ENCODE measurements at regions of chr2 and their contacts with region 1.

Region 1: GRCh38 chr2:221969087-221969829 is 329.5 kb downstream of the PAX3 start:
- DNase-seq: peak; percentile 55
- ATAC-seq: peak; percentile 96
- H3K4me3 ChIP-seq: no peak overlapping the region
- H3K27ac ChIP-seq: no peak overlapping the region
- H3K4me1 ChIP-seq: no peaks in the 10 kb centered on the region; the same call in 1 of the 2 replicates
- H3K27me3 ChIP-seq: peaks cover 4% of the 10 kb centered on the region
- CTCF ChIP-seq: peak; percentile 84
- POLR2A ChIP-seq: 0 out of 2 replicates have a peak, but pooled peaks have one; percentile 32
- RAD21 ChIP-seq: peak; percentile 84

Region 2: DNA sequence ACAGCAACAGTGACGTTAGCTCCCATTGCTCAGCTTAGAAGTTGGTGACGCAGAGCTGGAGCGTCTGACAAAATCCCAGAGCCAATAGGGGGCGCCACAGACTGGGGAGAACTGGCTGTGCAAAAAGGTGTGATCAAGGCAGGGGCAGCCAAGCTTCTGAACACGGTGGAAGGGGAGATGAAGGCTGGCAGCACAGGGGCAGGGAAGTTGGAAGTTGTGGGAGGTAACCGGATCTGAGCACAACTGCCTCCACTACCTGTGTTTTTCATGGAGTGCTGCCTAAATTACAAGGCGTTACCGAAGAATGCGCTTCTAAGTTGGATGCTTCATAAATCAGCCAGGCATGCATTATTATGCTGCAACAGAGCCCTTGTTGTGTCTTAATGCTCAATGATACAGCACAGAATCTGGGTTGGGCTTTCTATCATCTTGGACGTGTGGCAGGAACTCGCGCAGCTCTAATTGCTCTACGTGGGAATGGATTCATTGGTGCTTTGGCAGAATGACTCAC is 1971.9 kb before region 1 on chr2:
- CTCF ChIA-PET with region 1: no interaction called
- POLR2A ChIA-PET with region 1: no interaction called
- dilution Hi-C with region 1: no loop called
- in situ Hi-C with region 1: no loop called
- intact Hi-C with region 1: loop called (anchors 5 kb)
- DNase-seq: peak; percentile 29
- ATAC-seq: no peak
- H3K4me3 ChIP-seq: no peak overlapping the region
- H3K27ac ChIP-seq: no peak overlapping the region
- H3K4me1 ChIP-seq: peaks cover 12% of the 10 kb centered on the region
- H3K27me3 ChIP-seq: no peaks in the 10 kb centered on the region
- CTCF ChIP-seq: peak; percentile 49
- POLR2A ChIP-seq: no peak
- RAD21 ChIP-seq: peak; percentile 65

Region 3: GRCh38 chr2:221465776-221466175 is 503.5 kb before region 1 on chr2:
- CTCF ChIA-PET with region 1: no interaction called
- POLR2A ChIA-PET with region 1: no interaction called
- dilution Hi-C with region 1: no loop called
- in situ Hi-C with region 1: no loop called
- intact Hi-C with region 1: loop called (anchors 10 kb)
- DNase-seq: peak; percentile 15
- ATAC-seq: no peak
- H3K4me3 ChIP-seq: no peak overlapping the region
- H3K27ac ChIP-seq: no peak overlapping the region
- H3K4me1 ChIP-seq: no peaks in the 10 kb centered on the region
- H3K27me3 ChIP-seq: no peaks in the 10 kb centered on the region
- CTCF ChIP-seq: no peak
- POLR2A ChIP-seq: no peak
- RAD21 ChIP-seq: no peak

Measured in IMR-90 (cell line).